ENCODE measurements at regions of chr17 and their contacts with region 1.

Region 1: DNA sequence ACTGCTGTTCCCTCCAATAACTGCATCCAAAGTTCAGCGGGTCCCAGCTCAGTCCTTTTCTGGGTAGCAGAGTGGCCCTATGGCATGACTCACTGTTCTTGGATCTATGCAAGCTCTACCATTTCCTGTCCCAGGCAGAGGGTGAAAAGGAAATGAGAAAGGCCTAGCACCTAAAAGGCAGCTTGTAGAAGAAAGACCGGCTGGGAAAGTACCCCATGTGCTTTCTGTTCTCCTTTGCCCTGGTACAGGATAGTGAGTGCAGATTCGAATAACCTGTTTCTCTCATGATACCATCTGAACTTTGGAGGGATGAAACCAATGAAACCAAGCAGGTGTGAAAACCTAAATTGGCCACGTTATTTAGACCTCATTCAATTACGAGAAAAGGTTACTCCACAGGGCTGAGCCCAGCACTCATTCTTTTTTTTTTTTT is 12.7 kb upstream of the HASPIN start:
- DNase-seq: peak; percentile 32 to 95 (median 58)
- ATAC-seq: peak; percentile 93
- H3K4me3 ChIP-seq: peak overlapping the region; percentile 16
- H3K4me3 Mint-ChIP-seq: peak overlapping the region; percentile 68
- H3K27ac ChIP-seq: peak overlapping the region in 1 of 2 donors; percentile 52
- H3K27ac Mint-ChIP-seq: peak overlapping the region; percentile 83
- H3K4me1 ChIP-seq: peaks cover 35% of the 10 kb centered on the region
- H3K4me1 Mint-ChIP-seq: peaks cover 50% of the 10 kb centered on the region
- H3K27me3 ChIP-seq: no peaks in the 10 kb centered on the region
- H3K27me3 Mint-ChIP-seq: no peaks in the 10 kb centered on the region
- CTCF ChIP-seq: no peak

Region 2: GRCh38 chr17:3636154-3636907 is 74.6 kb before region 1 on chr17 and contains the starts of genes CTNS and SHPK:
- CTCF ChIA-PET with region 1: no interaction called
- POLR2A ChIA-PET with region 1: interaction called, 9 read pairs
- intact Hi-C with region 1: loop called in 1 of 2 experiments (anchors 2 kb)
- DNase-seq: peak; percentile 86 to 96 (median 92)
- ATAC-seq: peak; percentile 98
- H3K4me3 ChIP-seq: peak within 1 kb of the TSS; percentile 80
- H3K4me3 Mint-ChIP-seq: peak within 1 kb of the TSS; percentile 98
- H3K27ac ChIP-seq: peak within 1 kb of the TSS; percentile 93 to 99
- H3K27ac Mint-ChIP-seq: peak within 1 kb of the TSS; percentile 99
- H3K4me1 ChIP-seq: peaks cover 27% of the 10 kb centered on the region
- H3K4me1 Mint-ChIP-seq: peaks cover 21% of the 10 kb centered on the region
- H3K27me3 ChIP-seq: no peaks in the 10 kb centered on the region
- H3K27me3 Mint-ChIP-seq: no peaks in the 10 kb centered on the region
- CTCF ChIP-seq: no peak
- total RNA-seq, gene CTNS: 3.3 to 4.9 TPM
- total RNA-seq, gene SHPK: 3.4 TPM

Region 3: GRCh38 chr17:3695723-3696411 is 15.1 kb before region 1 on chr17 and contains the start of gene P2RX5:
- CTCF ChIA-PET with region 1: no interaction called
- POLR2A ChIA-PET with region 1: interaction called, 20 read pairs
- intact Hi-C with region 1: loop called in 1 of 2 experiments (anchors 2 kb)
- DNase-seq: peak in 11 of 14 experiments; percentile 15 to 65 (median 41)
- ATAC-seq: peak; percentile 73
- H3K4me3 ChIP-seq: peak within 1 kb of the TSS; percentile 86
- H3K4me3 Mint-ChIP-seq: peak within 1 kb of the TSS; percentile 98
- H3K27ac ChIP-seq: peak within 1 kb of the TSS in 1 of 2 donors; percentile 25
- H3K27ac Mint-ChIP-seq: peak within 1 kb of the TSS; percentile 72
- H3K4me1 ChIP-seq: peaks cover 31% of the 10 kb centered on the region
- H3K4me1 Mint-ChIP-seq: peaks cover 36% of the 10 kb centered on the region
- H3K27me3 ChIP-seq: no peaks in the 10 kb centered on the region
- H3K27me3 Mint-ChIP-seq: no peaks in the 10 kb centered on the region
- CTCF ChIP-seq: no peak
- total RNA-seq, gene P2RX5: 14.3 to 16.0 TPM

Measured in CD4-positive, alpha-beta T cell (primary cell).